BJ (cell line): ENCODE measurements at regions of chr9 and their contacts with region 1.

Region 1: DNA sequence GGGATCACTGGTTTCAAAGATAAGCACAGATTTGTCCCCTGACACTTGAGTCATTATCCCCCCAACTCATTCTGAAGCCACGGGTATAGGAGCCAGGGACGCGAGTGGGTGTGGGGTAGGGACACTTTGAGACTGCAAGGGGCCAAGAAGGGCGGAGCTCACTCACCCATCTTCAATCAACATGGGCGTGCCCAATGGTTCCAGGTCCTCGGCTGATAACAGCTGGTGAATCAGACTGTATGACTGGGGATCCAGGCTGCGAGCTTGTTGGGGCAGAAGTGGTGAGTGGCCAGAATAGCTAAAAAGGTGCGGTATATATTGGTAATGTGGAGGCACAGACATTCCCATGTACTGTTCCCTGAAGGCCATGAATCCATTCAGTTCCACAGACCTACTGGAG is 30.7 kb upstream of the NR5A1 start:
- DNase-seq: no peak
- H3K4me3 ChIP-seq: no peak overlapping the region
- H3K27me3 ChIP-seq: peaks cover 4% of the 10 kb centered on the region
- CTCF ChIP-seq: no peak

Region 2: DNA sequence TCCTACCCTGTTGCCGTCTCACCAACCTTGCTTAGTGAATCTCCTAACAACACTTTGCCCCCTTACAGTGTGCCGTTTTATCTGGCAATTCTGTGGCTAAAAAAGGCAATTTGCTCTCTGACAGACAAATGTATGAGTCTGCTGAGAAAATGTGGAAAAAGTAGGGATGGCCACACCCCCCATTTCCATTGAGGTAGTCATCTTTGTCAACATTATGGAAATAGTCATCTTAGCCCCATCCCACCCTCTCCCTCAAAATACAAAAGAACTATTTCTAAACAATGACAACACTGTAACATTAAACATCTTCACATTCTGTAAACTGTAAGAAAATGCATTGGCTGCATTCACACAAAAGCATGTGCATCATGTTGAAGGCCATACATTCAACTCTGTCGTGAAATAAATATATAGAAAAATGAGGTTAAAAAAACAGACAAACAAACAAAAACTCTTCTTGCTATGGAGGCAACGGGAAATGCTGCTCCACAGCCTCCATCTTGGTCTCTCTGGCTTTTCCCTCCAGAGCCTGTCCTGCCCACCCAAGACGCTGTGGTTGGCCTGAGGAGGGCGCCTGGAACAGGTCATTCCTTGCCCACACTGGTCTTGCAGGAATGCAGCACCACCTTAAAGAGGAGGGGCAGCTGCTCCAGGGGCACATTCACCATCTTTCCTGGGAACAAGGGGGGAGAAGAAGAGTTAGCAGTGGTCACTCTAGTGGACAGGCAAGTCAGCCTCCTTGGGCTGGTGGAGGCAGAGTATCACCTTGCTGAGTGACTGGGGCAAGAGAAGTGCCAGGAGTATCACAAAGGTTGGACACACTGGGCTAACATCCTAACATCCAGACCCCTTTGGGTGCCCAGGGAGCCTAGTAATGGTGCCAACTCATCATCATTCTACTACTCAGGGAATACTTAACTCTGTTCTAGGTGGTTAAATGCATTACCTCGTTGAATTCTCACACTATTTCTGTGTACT is 15.5 kb before region 1 on chr9:
- CTCF ChIA-PET with region 1: interaction called, 33 read pairs
- POLR2A ChIA-PET with region 1: no interaction called
- DNase-seq: no peak
- H3K4me3 ChIP-seq: no peak overlapping the region
- H3K27me3 ChIP-seq: peaks cover 10% of the 10 kb centered on the region
- CTCF ChIP-seq: no peak

Region 3: GRCh38 chr9:124527781-124528180 is 10.1 kb before region 1 on chr9:
- CTCF ChIA-PET with region 1: interaction called, 33 read pairs
- POLR2A ChIA-PET with region 1: no interaction called
- DNase-seq: peak; percentile 4
- H3K4me3 ChIP-seq: no peak overlapping the region
- H3K27me3 ChIP-seq: 0 out of 2 replicates have a peak, but pooled peaks cover under 1% of the 10 kb centered on the region
- CTCF ChIP-seq: no peak